AG04450 (cell line): ENCODE measurements at regions of chr5 and their contacts with region 1.

Region 1: GRCh38 chr5:35926389-35927051 is 11.9 kb downstream of the CAPSL start:
- DNase-seq: no peak
- H3K4me3 ChIP-seq: no peak overlapping the region
- H3K27ac ChIP-seq: peak overlapping the region; percentile 1
- H3K27me3 ChIP-seq: no peaks in the 10 kb centered on the region
- CTCF ChIP-seq: peak; percentile 88

Region 2: DNA sequence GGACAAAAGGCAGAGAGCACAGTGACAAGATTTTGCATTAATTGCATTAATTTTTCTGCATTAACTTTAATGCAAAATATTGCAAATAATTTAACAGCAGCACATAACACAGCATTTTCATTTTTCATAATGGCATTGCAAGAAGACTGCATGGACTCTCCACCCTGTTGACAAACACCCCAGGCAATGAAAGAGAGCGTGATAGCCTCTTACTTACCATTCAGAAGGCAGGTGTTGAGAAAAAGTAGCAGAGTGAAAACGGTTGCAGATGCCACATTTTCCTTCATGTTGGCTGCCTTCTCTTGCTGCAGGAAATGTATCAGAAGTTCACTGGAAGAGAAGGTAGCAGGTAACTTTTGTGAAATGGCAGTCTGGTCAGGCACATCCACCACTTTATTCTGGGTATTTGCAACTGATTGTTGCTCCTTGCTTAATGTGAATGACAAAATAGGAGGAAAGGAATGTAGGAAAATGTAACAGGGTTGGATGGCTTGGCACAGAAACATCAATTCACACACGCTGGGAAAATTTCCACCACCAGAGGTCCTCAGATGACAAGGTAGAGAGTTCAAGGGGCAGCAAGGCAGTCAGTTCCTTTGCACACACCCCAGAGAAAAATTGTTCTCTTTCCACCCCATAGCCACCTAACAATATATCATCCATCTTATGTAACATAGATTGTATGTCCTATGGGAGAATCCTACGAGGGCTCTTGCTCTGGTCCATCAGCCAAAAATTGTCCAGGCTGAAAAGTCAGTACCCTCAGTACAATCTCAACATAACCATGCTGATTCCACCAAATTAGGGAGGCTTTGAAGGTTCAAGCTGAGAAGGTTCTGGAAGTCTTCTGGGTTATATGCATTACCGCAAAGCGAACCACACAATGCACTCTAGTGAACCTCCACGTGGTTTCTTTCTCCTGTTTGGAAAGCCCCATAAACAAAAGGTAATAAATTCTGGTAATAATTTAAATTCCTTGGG is 836.9 kb before region 1 on chr5:
- CTCF ChIA-PET with region 1: interaction called, 11 read pairs
- POLR2A ChIA-PET with region 1: no interaction called
- DNase-seq: peak; percentile 8
- H3K4me3 ChIP-seq: no peak overlapping the region
- H3K27ac ChIP-seq: no peak overlapping the region
- H3K27me3 ChIP-seq: peaks cover 9% of the 10 kb centered on the region
- CTCF ChIP-seq: peak; percentile 82

Region 3: GRCh38 chr5:35383041-35383440 is 543.5 kb before region 1 on chr5:
- CTCF ChIA-PET with region 1: no interaction called
- POLR2A ChIA-PET with region 1: no interaction called
- DNase-seq: no peak
- H3K4me3 ChIP-seq: no peak overlapping the region
- H3K27ac ChIP-seq: no peak overlapping the region
- H3K27me3 ChIP-seq: no peaks in the 10 kb centered on the region
- CTCF ChIP-seq: no peak

Region 4: GRCh38 chr5:35617435-35618303 is 308.9 kb before region 1 on chr5 and contains the start of gene SPEF2:
- CTCF ChIA-PET with region 1: interaction called, 104 read pairs
- POLR2A ChIA-PET with region 1: no interaction called
- DNase-seq: peak; percentile 74
- H3K4me3 ChIP-seq: peak within 1 kb of the TSS; percentile 89
- H3K27ac ChIP-seq: no peak within 1 kb of the TSS
- H3K27me3 ChIP-seq: no peaks in the 10 kb centered on the region
- CTCF ChIP-seq: peak; percentile 86
- polyA plus RNA-seq, gene SPEF2: 2.3 and 4.2 TPM in 2 replicates

Region 5: GRCh38 chr5:35651002-35651756 is 275.3 kb before region 1 on chr5:
- CTCF ChIA-PET with region 1: interaction called, 254 read pairs
- POLR2A ChIA-PET with region 1: no interaction called
- DNase-seq: peak; percentile 21
- H3K4me3 ChIP-seq: no peak overlapping the region
- H3K27ac ChIP-seq: no peak overlapping the region
- H3K27me3 ChIP-seq: no peaks in the 10 kb centered on the region
- CTCF ChIP-seq: peak; percentile 73

Region 6: GRCh38 chr5:35777358-35778087 is 149.0 kb before region 1 on chr5:
- CTCF ChIA-PET with region 1: interaction called, 33 read pairs
- POLR2A ChIA-PET with region 1: no interaction called
- DNase-seq: peak; percentile 48
- H3K4me3 ChIP-seq: no peak overlapping the region
- H3K27ac ChIP-seq: no peak overlapping the region
- H3K27me3 ChIP-seq: no peaks in the 10 kb centered on the region
- CTCF ChIP-seq: peak; percentile 70